Ovary (tissue), 10 donors: ENCODE measurements at regions of chr14 and their contacts with region 1.

Region 1: GRCh38 chr14:56339855-56340701 is 221.9 kb downstream of the PELI2 start:
- DNase-seq: peak; percentile 70 to 83 (median 82)
- H3K4me3 ChIP-seq: no peak overlapping the region
- H3K27ac ChIP-seq: no peak overlapping the region
- H3K4me1 ChIP-seq: peaks cover 11% of the 10 kb centered on the region
- H3K27me3 ChIP-seq: no peaks in the 10 kb centered on the region
- CTCF ChIP-seq: peak; percentile 53 to 79 (median 67)
- EP300 ChIP-seq: no peak
- POLR2A ChIP-seq: no peak

Region 2: DNA sequence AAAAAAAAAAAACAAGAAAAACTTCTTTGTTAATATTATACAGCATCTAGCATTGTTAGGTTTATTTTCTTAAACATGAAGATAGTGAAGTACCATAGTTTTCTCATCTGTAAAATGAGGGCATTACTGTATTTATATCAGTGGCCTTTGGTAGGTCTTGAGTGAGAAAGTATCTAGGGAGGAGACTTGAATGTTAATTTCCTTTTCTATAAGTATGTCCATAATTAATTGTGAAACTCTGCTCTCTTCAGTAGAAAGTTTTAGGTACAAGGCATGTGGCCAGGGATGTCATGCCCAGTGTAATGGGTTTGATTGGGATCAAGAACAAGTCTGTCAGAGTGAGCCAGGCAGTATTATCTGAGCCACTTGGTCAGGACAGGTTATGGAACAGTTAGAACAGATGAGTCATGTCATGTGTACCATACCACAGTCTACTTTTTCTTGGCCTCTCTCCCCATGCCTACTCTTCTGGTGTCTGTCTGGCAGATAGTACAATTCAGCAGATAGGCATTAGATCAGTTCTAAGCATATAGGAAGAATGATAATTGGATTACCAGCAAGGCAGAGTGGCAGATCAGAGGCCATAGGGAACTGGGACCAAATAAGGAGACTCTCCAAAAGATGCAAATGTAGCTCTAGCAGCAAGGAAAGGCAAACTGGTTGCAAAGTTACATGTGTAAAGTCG is 1038.5 kb before region 1 on chr14:
- intact Hi-C with region 1: loop called in 1 of 4 experiments (anchors 10 kb)
- DNase-seq: no peak
- H3K4me3 ChIP-seq: no peak overlapping the region
- H3K27ac ChIP-seq: no peak overlapping the region
- H3K4me1 ChIP-seq: peaks cover 10% of the 10 kb centered on the region
- H3K27me3 ChIP-seq: no peaks in the 10 kb centered on the region
- CTCF ChIP-seq: no peak
- EP300 ChIP-seq: no peak
- POLR2A ChIP-seq: no peak

Region 3: GRCh38 chr14:55446218-55446654 is 893.8 kb before region 1 on chr14:
- intact Hi-C with region 1: no loop called
- DNase-seq: peak in 3 of 5 donors; percentile 40 to 65 (median 41)
- H3K4me3 ChIP-seq: no peak overlapping the region
- H3K27ac ChIP-seq: no peak overlapping the region
- H3K4me1 ChIP-seq: peaks cover under 1% of the 10 kb centered on the region
- H3K27me3 ChIP-seq: no peaks in the 10 kb centered on the region
- CTCF ChIP-seq: peak in 2 of 3 donors; percentile 9 to 29
- EP300 ChIP-seq: no peak
- POLR2A ChIP-seq: no peak

Region 4: GRCh38 chr14:56112781-56113180 is 227.3 kb before region 1 on chr14:
- intact Hi-C with region 1: loop called in 1 of 4 experiments (anchors 5 kb)
- DNase-seq: no peak
- H3K4me3 ChIP-seq: no peak overlapping the region
- H3K27ac ChIP-seq: no peak overlapping the region
- H3K4me1 ChIP-seq: peaks cover 2% of the 10 kb centered on the region
- H3K27me3 ChIP-seq: no peaks in the 10 kb centered on the region
- CTCF ChIP-seq: no peak
- EP300 ChIP-seq: no peak
- POLR2A ChIP-seq: no peak